HCT116 (cell line): ENCODE measurements at regions of chr9 and their contacts with region 1.

Region 1: DNA sequence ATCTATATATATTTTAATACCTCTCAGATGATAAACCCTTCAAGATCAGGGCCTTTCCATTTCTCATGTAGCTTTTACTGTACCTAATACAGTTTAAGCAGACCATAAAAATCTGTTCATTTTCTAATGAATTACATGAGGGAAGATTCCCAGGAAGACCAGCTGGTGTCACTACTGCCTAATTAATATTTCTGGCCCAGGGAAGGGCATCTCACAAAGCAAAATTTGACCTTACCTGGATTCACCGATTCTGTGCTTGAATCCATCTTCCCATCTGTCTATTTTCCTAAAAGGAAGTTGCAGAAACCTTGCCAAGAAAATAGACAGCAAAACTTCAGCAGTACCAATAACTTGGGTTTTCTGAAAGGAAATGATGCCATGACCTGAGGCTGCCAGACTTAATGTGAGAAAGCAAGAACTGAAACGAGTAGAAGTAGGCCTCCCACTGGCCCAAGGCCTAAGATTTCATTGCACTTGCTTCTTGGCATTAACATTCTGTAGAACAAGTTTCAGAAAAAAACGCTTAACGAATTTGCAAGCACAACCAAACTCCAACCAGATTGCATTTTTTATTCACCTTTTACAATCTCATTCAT is 83.0 kb upstream of the GLIS3 start:
- DNase-seq: peak; percentile 23
- ATAC-seq: peak; percentile 75
- H3K4me3 ChIP-seq: no peak overlapping the region
- H3K27ac ChIP-seq: no peak overlapping the region
- H3K4me1 ChIP-seq: no peaks in the 10 kb centered on the region
- H3K27me3 ChIP-seq: no peaks in the 10 kb centered on the region; the same call in 1 of the 2 replicates
- CTCF ChIP-seq: peak; percentile 37 to 72 (median 70); a peak in 5 of 6 replicates
- POLR2A ChIP-seq: no peak
- RAD21 ChIP-seq: peak; percentile 86

Region 2: DNA sequence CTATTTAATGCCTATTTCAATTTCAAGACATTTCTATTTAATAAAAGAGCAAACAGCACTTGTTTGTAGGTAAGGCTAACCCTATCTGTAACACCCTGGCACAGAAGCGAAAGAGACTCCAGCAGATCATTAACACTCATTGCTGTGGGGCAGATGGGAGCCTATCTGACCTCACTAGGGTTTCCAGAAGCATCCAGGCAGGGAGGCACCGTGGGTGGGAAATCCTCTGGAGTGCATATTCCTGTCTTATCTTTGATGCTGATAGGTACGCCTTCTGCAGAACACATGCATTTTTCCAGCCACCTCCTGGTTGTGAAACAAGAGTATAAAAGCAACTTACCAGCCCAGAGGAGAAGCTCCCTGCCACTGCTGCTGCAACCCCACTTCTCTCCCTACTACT is 316.7 kb before region 1 on chr9:
- CTCF ChIA-PET with region 1: no interaction called
- POLR2A ChIA-PET with region 1: no interaction called
- RAD21 ChIA-PET with region 1: no interaction called
- intact Hi-C with region 1: no loop called
- DNase-seq: no peak
- ATAC-seq: no peak
- H3K4me3 ChIP-seq: no peak overlapping the region
- H3K27ac ChIP-seq: no peak overlapping the region
- H3K4me1 ChIP-seq: no peaks in the 10 kb centered on the region
- H3K27me3 ChIP-seq: no peaks in the 10 kb centered on the region
- CTCF ChIP-seq: no peak
- POLR2A ChIP-seq: no peak
- RAD21 ChIP-seq: no peak

Region 3: GRCh38 chr9:4548811-4549725 is 166.2 kb after region 1 on chr9:
- CTCF ChIA-PET with region 1: interaction called, 12 read pairs
- POLR2A ChIA-PET with region 1: no interaction called
- RAD21 ChIA-PET with region 1: interaction called in 1 of 2 experiments, 3 read pairs
- intact Hi-C with region 1: loop called (anchors 1 kb)
- DNase-seq: no peak
- ATAC-seq: peak; percentile 94
- H3K4me3 ChIP-seq: no peak overlapping the region
- H3K27ac ChIP-seq: no peak overlapping the region
- H3K4me1 ChIP-seq: peaks cover 4 to 6% of the 10 kb centered on the region in 2 experiments; a peak in 3 of 4 replicates
- H3K27me3 ChIP-seq: no peaks in the 10 kb centered on the region
- CTCF ChIP-seq: peak; percentile 44 to 72 (median 64); a peak in 5 of 6 replicates
- POLR2A ChIP-seq: no peak
- RAD21 ChIP-seq: peak; percentile 51

Region 4: GRCh38 chr9:4640027-4640426 is 257.2 kb after region 1 on chr9:
- CTCF ChIA-PET with region 1: interaction called, 20 read pairs
- POLR2A ChIA-PET with region 1: no interaction called
- RAD21 ChIA-PET with region 1: interaction called, 4 to 6 read pairs
- intact Hi-C with region 1: loop called (anchors 1 kb)
- DNase-seq: peak; percentile 31
- ATAC-seq: peak; percentile 71
- H3K4me3 ChIP-seq: no peak overlapping the region
- H3K27ac ChIP-seq: no peak overlapping the region
- H3K4me1 ChIP-seq: no peaks in the 10 kb centered on the region
- H3K27me3 ChIP-seq: no peaks in the 10 kb centered on the region
- CTCF ChIP-seq: peak; percentile 59 to 74 (median 65); a peak in 5 of 6 replicates
- POLR2A ChIP-seq: no peak
- RAD21 ChIP-seq: peak; percentile 81

Region 5: DNA sequence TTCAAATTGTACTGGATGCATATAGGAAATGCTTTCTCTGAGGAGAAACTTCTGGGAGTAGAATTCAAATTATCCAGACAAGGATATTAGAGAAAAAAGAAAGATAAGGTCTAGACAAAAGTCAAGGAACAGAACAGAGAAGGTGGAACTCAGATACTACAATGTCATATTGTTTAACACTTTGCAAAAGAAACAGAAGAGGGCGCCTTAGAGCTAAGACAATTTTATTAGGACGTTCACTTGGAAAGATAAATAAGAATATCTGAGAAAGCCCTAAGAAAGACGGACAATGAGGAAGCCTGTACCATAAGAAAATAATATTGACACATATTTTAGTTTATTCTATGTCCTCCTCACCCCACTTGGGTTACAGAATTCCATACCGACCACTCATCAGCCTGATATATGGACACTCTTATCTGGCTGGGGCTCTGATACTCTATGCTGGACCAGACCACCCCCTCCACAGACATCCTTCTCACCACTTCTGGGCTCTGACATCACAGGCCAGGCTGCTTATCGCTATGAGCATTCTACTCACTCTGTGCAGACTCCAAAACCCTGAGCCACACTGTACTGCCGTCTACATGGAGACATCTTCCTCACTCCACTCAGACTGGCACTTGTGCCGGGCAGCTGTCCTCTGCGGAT is 367.3 kb after region 1 on chr9:
- CTCF ChIA-PET with region 1: interaction called, 3 read pairs
- POLR2A ChIA-PET with region 1: no interaction called
- RAD21 ChIA-PET with region 1: no interaction called
- intact Hi-C with region 1: loop called (anchors 5 kb)
- DNase-seq: no peak
- ATAC-seq: peak; percentile 84
- H3K4me3 ChIP-seq: no peak overlapping the region
- H3K27ac ChIP-seq: no peak overlapping the region
- H3K4me1 ChIP-seq: no peaks in the 10 kb centered on the region
- H3K27me3 ChIP-seq: no peaks in the 10 kb centered on the region
- CTCF ChIP-seq: peak; percentile 51 to 67 (median 66)
- POLR2A ChIP-seq: no peak
- RAD21 ChIP-seq: peak; percentile 61

Region 6: DNA sequence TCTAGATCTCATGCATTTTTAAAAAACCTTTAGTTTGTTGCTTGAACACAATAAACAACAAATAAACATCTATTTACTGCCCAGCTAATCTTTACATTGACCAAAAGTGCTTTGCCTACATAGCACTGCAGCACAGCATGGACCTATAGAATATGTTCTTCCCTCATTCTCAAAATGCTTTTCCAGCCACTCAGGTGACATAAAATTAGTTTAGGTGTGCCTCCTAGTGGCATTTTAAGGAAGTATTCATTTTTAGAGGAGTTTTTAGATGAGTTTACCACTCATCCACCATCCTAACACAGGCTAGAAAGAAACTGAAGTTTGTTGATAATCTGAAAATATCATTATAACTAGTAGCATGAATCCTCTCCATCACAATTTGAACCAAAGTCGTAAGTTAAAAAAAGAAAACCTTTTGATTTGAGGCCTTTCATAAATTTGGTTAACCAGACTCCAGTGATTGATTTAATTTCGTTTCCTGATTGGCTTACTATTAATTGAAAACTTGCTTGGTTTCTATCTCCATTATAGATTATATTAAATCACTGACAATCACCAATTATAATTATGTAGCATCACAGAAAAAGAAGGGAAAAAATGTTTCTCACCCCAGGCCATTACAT is 1042.3 kb after region 1 on chr9:
- CTCF ChIA-PET with region 1: interaction called, 4 read pairs
- POLR2A ChIA-PET with region 1: no interaction called
- RAD21 ChIA-PET with region 1: no interaction called
- intact Hi-C with region 1: loop called (anchors 10 kb)
- DNase-seq: no peak
- ATAC-seq: peak; percentile 82
- H3K4me3 ChIP-seq: no peak overlapping the region
- H3K27ac ChIP-seq: no peak overlapping the region
- H3K4me1 ChIP-seq: no peaks in the 10 kb centered on the region
- H3K27me3 ChIP-seq: no peaks in the 10 kb centered on the region
- CTCF ChIP-seq: peak; percentile 40 to 71 (median 69); a peak in 5 of 6 replicates
- POLR2A ChIP-seq: no peak
- RAD21 ChIP-seq: peak; percentile 72

Region 7: GRCh38 chr9:5593904-5594303 is 1211.1 kb after region 1 on chr9:
- CTCF ChIA-PET with region 1: no interaction called
- POLR2A ChIA-PET with region 1: no interaction called
- RAD21 ChIA-PET with region 1: no interaction called
- intact Hi-C with region 1: loop called (anchors 5 kb)
- DNase-seq: no peak
- ATAC-seq: no peak
- H3K4me3 ChIP-seq: no peak overlapping the region
- H3K27ac ChIP-seq: no peak overlapping the region
- H3K4me1 ChIP-seq: no peaks in the 10 kb centered on the region
- H3K27me3 ChIP-seq: no peaks in the 10 kb centered on the region
- CTCF ChIP-seq: no peak
- POLR2A ChIP-seq: no peak
- RAD21 ChIP-seq: no peak